ENCODE measurements at regions of chr14 and their contacts with region 1.

Region 1: GRCh38 chr14:67240978-67241414 is 239 bp upstream of the PALS1 start:
- DNase-seq: peak; percentile 97 to 98
- H3K4me3 ChIP-seq: peak overlapping the region; percentile 62
- H3K4me3 Mint-ChIP-seq: peak overlapping the region; percentile 79
- H3K27ac Mint-ChIP-seq: peak overlapping the region; percentile 72
- H3K4me1 ChIP-seq: peaks cover 5% of the 10 kb centered on the region
- H3K4me1 Mint-ChIP-seq: peaks cover 5% of the 10 kb centered on the region
- H3K27me3 ChIP-seq: no peaks in the 10 kb centered on the region
- H3K27me3 Mint-ChIP-seq: no peaks in the 10 kb centered on the region
- CTCF ChIP-seq: no peak

Region 2: GRCh38 chr14:67166450-67166853 is 74.5 kb before region 1 on chr14:
- CTCF ChIA-PET with region 1: no interaction called
- POLR2A ChIA-PET with region 1: no interaction called
- intact Hi-C with region 1: loop called (anchors 1 kb)
- DNase-seq: peak; percentile 44 to 56
- H3K4me3 ChIP-seq: no peak overlapping the region
- H3K4me3 Mint-ChIP-seq: no peak overlapping the region
- H3K27ac Mint-ChIP-seq: no peak overlapping the region
- H3K4me1 ChIP-seq: peaks cover 37% of the 10 kb centered on the region
- H3K4me1 Mint-ChIP-seq: peaks cover 13% of the 10 kb centered on the region
- H3K27me3 ChIP-seq: no peaks in the 10 kb centered on the region
- H3K27me3 Mint-ChIP-seq: no peaks in the 10 kb centered on the region
- CTCF ChIP-seq: peak; percentile 64 to 80

Region 3: DNA sequence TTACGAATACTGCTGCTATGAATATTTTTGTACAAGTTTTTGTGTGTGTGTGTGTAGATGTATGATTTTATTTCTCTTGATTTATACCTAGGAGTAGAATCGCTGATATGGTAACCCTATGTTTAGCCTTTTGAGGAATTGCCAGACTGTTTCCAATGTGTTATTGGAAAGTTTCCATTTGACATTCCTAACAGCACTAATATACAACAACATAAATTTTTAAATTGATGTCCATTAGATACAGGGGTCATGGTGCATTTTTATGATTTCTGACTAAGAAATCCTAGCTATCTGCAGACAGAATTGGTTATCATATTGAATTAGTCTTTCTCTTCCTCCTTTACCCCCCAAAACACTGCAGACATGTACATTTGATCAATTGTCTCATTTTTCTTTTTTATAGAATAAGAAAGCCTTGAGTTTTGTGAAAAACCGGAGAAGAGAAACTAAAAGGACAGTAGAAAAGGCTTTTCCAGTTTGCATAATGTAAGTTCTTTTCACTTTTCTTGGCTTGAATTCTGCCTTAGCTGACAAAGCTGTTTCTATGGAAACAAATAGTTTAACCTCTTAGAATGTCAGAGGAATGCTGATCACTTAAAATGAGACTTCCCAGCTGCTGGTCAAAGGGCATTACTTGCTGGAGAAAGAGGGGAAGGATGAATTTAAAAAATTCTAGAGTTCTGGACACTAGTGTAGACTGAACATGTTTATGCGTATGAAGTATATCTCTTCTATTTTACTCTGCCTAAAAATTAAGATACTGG is 28.5 kb after region 1 on chr14:
- CTCF ChIA-PET with region 1: no interaction called
- POLR2A ChIA-PET with region 1: interaction called, 3 read pairs
- intact Hi-C with region 1: loop called (anchors 1 kb)
- DNase-seq: peak in 1 of 2 experiments; percentile 37
- H3K4me3 ChIP-seq: no peak overlapping the region
- H3K4me3 Mint-ChIP-seq: peak overlapping the region; percentile 18
- H3K27ac Mint-ChIP-seq: peak overlapping the region; percentile 89
- H3K4me1 ChIP-seq: peaks cover 49% of the 10 kb centered on the region
- H3K4me1 Mint-ChIP-seq: peaks cover 49% of the 10 kb centered on the region
- H3K27me3 ChIP-seq: no peaks in the 10 kb centered on the region
- H3K27me3 Mint-ChIP-seq: no peaks in the 10 kb centered on the region
- CTCF ChIP-seq: no peak

Region 4: DNA sequence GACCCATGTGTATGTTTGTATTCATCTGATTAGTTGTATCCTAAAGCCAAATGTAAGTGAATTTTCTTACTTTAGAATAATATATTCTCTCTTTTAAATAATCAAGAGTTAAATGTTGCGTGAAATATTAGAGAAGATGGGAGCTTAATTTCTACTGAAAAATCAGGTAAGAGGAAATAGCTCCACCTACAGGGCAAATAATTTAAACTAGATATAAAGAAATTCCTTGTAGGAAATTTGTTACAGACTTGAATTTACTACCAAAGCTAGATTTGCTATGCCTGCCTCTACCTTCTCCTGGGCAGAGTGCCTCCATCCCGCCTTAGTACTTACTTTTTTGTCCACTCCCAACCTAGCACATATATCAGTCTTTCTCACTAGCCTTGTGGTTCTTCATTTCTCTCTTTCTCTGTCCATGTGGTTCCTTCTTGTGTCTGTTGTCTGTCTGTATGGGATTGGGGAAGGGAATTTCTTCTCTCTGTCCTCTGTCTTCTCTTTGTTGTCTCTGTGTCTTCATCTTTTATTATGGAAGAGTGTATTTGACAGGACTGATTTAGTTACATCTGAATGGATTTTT is 45.0 kb after region 1 on chr14:
- CTCF ChIA-PET with region 1: interaction called, 10 read pairs
- POLR2A ChIA-PET with region 1: interaction called, 3 read pairs
- intact Hi-C with region 1: loop called (anchors 1 kb)
- DNase-seq: peak in 1 of 2 experiments; percentile 25
- H3K4me3 ChIP-seq: no peak overlapping the region
- H3K4me3 Mint-ChIP-seq: no peak overlapping the region
- H3K27ac Mint-ChIP-seq: no peak overlapping the region
- H3K4me1 ChIP-seq: no peaks in the 10 kb centered on the region
- H3K4me1 Mint-ChIP-seq: no peaks in the 10 kb centered on the region
- H3K27me3 ChIP-seq: no peaks in the 10 kb centered on the region
- H3K27me3 Mint-ChIP-seq: no peaks in the 10 kb centered on the region
- CTCF ChIP-seq: peak; percentile 37 to 61

Region 5: GRCh38 chr14:67359775-67360648 is 119.0 kb after region 1 on chr14 and contains the starts of genes ATP6V1D and EIF2S1:
- CTCF ChIA-PET with region 1: no interaction called
- POLR2A ChIA-PET with region 1: interaction called, 4 read pairs
- intact Hi-C with region 1: loop called (anchors 1 kb)
- DNase-seq: peak; percentile 99
- H3K4me3 ChIP-seq: peak within 1 kb of the TSS; percentile 97
- H3K4me3 Mint-ChIP-seq: peak within 1 kb of the TSS; percentile 85
- H3K27ac Mint-ChIP-seq: peak within 1 kb of the TSS; percentile 96
- H3K4me1 ChIP-seq: peaks cover 6% of the 10 kb centered on the region; the same call in 1 of the 2 replicates
- H3K4me1 Mint-ChIP-seq: peaks cover 7% of the 10 kb centered on the region
- H3K27me3 ChIP-seq: no peaks in the 10 kb centered on the region
- H3K27me3 Mint-ChIP-seq: no peaks in the 10 kb centered on the region
- CTCF ChIP-seq: peak; percentile 89 to 95
- total RNA-seq, gene ATP6V1D: 60.0 and 77.4 TPM in 2 replicates
- total RNA-seq, gene EIF2S1: 144 and 156 TPM in 2 replicates

Region 6: DNA sequence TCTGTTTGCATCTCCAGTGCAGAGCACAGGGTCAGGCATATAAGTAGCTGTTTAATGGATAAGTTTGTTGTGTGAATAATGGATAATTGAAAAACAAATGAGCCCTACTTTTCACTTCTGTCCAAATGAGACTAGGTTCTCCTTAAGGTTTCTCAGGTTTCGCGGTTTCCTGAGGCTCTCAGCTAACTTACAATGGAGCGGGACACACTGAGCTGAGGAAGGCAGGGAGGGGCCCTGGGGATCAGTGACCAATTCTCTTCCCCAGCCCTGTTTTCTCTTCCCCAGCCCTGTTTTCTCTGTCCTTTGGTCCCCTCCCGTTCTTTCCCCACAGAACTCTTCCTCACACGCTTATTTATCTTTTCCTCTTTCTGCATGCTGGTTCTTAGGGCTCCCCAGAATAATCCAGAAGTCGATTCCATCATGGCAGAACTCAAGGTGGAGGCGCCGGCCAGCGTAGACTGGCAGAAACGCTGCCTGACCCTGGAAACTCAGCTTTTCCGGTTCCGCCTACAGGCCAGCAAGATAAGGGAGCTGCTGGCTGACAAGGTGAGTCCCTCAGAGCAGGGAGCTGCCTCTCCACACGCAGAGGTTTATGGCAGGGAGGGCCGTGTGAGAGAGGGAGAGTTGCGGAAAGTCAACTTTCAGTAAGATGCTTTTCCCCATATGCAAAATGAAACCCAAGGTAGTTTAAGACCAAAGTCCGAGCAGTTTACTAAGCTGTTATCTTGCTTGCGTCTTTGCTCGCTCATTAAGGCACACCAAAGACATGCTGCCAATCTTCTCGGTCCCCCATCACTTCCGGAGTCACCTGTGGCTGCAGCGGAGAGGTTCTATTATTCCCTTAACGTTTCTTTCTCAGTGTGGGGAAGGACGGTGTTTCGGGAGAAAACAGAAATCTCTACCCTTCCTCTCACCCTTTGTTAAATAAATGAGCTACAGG is 300.7 kb after region 1 on chr14:
- CTCF ChIA-PET with region 1: no interaction called
- POLR2A ChIA-PET with region 1: no interaction called
- intact Hi-C with region 1: no loop called
- DNase-seq: peak; percentile 83 to 91
- H3K4me3 ChIP-seq: peak overlapping the region; percentile 37
- H3K4me3 Mint-ChIP-seq: peak overlapping the region; percentile 84
- H3K27ac Mint-ChIP-seq: peak overlapping the region; percentile 95
- H3K4me1 ChIP-seq: peaks cover 7% of the 10 kb centered on the region; the same call in 1 of the 2 replicates
- H3K4me1 Mint-ChIP-seq: peaks cover 7% of the 10 kb centered on the region
- H3K27me3 ChIP-seq: no peaks in the 10 kb centered on the region
- H3K27me3 Mint-ChIP-seq: no peaks in the 10 kb centered on the region
- CTCF ChIP-seq: no peak